Heart left ventricle (tissue), 16 donors: ENCODE measurements at regions of chr17 and their contacts with region 1.

Region 1: GRCh38 chr17:81484195-81484979 is 28.2 kb downstream of the ACTG1 start:
- DNase-seq: peak; percentile 88 to 95 (median 91)
- ATAC-seq: peak; percentile 23 to 75 (median 60)
- H3K4me3 ChIP-seq: peak overlapping the region; percentile 20 to 64 (median 51)
- H3K27ac ChIP-seq: peak overlapping the region in 2 of 12 donors; percentile 49 to 62
- H3K4me1 ChIP-seq: peaks cover 0 to 70% (median 53%) of the 10 kb centered on the region in 12 donors
- H3K27me3 ChIP-seq: peaks cover 0 to 8% (median 0%) of the 10 kb centered on the region in 9 donors
- CTCF ChIP-seq: peak; percentile 93 to 100 (median 98)
- POLR2A ChIP-seq: no peak

Region 2: GRCh38 chr17:81142301-81143199 is 341.8 kb before region 1 on chr17:
- intact Hi-C with region 1: loop called in 1 of 10 experiments (anchors 5 kb)
- DNase-seq: peak; percentile 71 to 88 (median 81)
- ATAC-seq: peak; percentile 90 to 97 (median 94)
- H3K4me3 ChIP-seq: no peak overlapping the region
- H3K27ac ChIP-seq: no peak overlapping the region
- H3K4me1 ChIP-seq: peaks cover 0 to 9% (median 4%) of the 10 kb centered on the region in 12 donors
- H3K27me3 ChIP-seq: no peaks in the 10 kb centered on the region
- CTCF ChIP-seq: peak; percentile 57 to 82 (median 70)
- POLR2A ChIP-seq: no peak

Region 3: GRCh38 chr17:81294856-81295680 is 189.3 kb before region 1 on chr17 and contains the start of gene SLC38A10:
- intact Hi-C with region 1: loop called in 9 of 10 experiments (anchors 2 to 10 kb)
- DNase-seq: peak; percentile 93 to 98 (median 94)
- ATAC-seq: peak; percentile 81 to 94 (median 94)
- H3K4me3 ChIP-seq: peak within 1 kb of the TSS; percentile 57 to 97 (median 85)
- H3K27ac ChIP-seq: peak within 1 kb of the TSS; percentile 85 to 99 (median 96)
- H3K4me1 ChIP-seq: peaks cover 8 to 49% (median 31%) of the 10 kb centered on the region in 12 donors
- H3K27me3 ChIP-seq: no peaks in the 10 kb centered on the region
- CTCF ChIP-seq: peak in 4 of 12 donors; percentile 16 to 63 (median 24)
- POLR2A ChIP-seq: peak; percentile 44 to 94
- total RNA-seq, gene SLC38A10: 27.4 to 67.7 (median 43.1) TPM

Region 4: DNA sequence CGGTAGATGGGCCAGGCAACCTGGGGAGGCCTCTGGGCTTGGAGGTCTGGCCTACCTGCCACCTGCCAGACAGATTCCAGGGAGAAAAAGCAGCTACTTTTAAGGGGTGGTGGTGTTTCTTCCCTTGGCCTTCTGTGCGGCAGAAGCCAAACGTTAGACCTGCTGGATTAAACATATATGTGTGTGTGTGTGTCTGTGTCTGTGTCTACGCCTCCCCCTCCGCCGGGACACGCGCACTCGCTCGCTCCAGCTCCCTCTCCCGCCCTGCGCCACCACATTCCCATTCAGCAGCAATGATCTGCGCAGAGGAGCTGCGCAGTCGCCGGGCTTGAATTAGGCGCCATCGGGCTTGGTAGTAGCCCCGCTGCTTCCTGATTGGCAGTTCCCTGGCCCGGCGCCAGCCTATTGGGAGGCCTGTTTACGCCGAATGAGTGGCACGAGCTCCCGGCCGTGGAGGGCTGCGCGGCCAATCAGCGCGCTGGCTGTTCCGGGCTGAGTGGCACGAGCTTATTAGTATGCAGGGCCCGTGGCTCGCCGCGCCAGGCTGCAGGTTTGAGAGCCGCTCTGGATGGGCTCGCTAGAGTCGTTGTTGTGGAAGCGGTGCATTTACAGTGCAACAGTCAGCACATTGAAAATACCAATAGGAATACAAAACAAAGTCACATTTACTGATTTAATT is 89.3 kb before region 1 on chr17 and contains the start of gene BAHCC1:
- intact Hi-C with region 1: loop called (anchors 2 to 5 kb)
- DNase-seq: peak; percentile 100
- ATAC-seq: peak; percentile 80 to 89 (median 87)
- H3K4me3 ChIP-seq: peak within 1 kb of the TSS; percentile 57 to 95 (median 80)
- H3K27ac ChIP-seq: peak within 1 kb of the TSS; percentile 91 to 100 (median 97)
- H3K4me1 ChIP-seq: peaks cover 6 to 67% (median 30%) of the 10 kb centered on the region in 12 donors
- H3K27me3 ChIP-seq: peaks cover 0 to 14% (median 0%) of the 10 kb centered on the region in 9 donors
- CTCF ChIP-seq: no peak
- POLR2A ChIP-seq: peak; percentile 55 to 98
- total RNA-seq, gene BAHCC1: 6.0 to 19.6 (median 9.3) TPM

Region 5: DNA sequence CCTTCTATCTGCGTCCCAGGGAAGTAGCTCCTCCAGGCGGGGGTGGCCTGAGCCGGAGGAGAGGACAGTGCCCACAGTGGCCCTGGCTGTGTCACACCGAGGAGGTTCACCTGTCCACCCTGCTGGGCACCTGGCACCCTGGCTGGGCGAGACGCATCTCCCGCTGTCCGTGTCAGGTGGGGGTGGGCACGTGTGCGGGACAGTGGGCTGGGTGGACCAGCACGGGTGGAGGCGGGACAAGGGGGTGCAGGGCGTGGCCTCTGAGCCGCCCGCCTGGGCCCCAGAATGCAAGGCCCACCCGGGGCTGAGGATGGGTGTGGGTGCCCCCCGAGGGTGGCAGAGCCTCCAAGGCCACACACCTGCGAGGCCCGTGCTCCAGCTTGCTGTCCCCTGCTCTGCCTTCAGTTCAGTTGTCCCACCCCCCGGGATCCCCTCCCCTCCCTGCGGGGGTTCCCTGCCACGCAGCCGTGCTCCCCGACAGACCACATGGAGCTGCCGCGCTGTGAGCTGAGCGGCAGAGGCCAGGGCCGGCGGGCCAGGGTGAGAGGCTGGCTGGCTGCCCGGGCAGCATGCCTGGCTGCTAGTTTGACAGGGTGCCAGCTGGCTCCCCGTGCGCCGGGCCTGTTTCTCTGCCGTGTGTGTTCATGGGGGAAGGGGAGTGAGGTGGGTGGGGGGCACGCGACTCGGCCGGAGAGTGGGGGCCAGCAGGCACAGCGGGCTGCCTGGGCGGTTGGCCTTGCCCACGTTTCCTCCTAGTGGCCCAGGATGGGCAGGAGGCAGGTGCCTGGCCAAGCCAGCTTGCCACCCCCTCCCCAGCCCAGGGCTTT is 55.2 kb before region 1 on chr17:
- intact Hi-C with region 1: loop called in 4 of 10 experiments (anchors 2 to 5 kb)
- DNase-seq: peak; percentile 75 to 88 (median 84)
- ATAC-seq: peak; percentile 69 to 85 (median 75)
- H3K4me3 ChIP-seq: peak overlapping the region in 8 of 12 donors; percentile 1 to 32 (median 8)
- H3K27ac ChIP-seq: peak overlapping the region in 2 of 12 donors; percentile 13 to 15
- H3K4me1 ChIP-seq: peaks cover 16 to 59% (median 46%) of the 10 kb centered on the region in 12 donors
- H3K27me3 ChIP-seq: peaks cover 0 to 26% (median 0%) of the 10 kb centered on the region in 9 donors
- CTCF ChIP-seq: no peak
- POLR2A ChIP-seq: no peak

Region 6: GRCh38 chr17:81453712-81454111 is 30.7 kb before region 1 on chr17:
- intact Hi-C with region 1: no loop called
- DNase-seq: no peak
- ATAC-seq: peak in 1 of 4 donors; percentile 58
- H3K4me3 ChIP-seq: no peak overlapping the region
- H3K27ac ChIP-seq: no peak overlapping the region
- H3K4me1 ChIP-seq: peaks cover 0 to 10% (median 0%) of the 10 kb centered on the region in 12 donors
- H3K27me3 ChIP-seq: no peaks in the 10 kb centered on the region
- CTCF ChIP-seq: no peak
- POLR2A ChIP-seq: no peak

Region 7: DNA sequence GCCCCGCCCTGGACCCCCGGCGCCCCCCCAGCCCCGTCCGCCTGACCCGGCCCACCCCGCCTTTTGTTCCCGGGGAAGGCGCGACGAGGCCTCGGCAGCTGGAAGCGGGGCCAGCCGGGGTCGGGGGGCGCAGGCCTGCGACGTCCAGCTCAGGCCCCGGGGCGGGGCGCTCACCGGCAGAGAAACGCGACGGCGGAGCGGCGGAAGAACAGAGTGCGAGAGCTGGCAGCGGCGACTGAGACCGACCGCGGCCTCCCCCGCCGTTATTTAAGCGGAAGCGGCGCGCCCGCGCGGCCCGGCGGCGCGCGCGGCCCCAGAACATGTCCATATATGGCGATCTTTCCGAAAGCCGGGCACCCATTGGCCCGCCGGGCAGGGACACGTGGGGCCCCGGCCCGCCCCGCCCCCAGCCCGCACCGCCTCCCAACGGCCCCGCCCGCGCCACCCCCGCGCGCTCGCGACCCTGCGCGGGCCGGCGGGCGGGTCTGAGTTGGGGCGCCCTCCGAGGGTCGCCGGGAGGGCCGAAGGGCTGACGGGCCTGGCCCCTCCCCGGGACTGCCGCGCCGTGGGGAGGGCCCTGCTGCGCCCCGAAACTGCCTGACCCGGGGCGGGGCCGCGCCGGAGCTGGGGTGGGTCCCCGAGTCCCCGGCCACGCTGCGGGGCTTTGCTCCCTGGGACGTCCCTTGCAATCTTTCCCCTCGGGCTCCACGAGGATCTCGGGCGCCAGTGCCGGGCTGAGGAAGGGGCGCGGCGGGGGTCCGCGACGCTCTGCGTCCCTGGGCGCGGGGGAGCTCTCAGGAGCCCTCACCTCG is 28.4 kb after region 1 on chr17 and contains the start of gene ACTG1:
- intact Hi-C with region 1: loop called in 2 of 10 experiments (anchors 1 to 2 kb)
- DNase-seq: peak; percentile 94 to 96 (median 95)
- ATAC-seq: peak; percentile 61 to 77 (median 66)
- H3K4me3 ChIP-seq: peak within 1 kb of the TSS; percentile 81 to 99 (median 94)
- H3K27ac ChIP-seq: peak within 1 kb of the TSS; percentile 96 to 100 (median 100)
- H3K4me1 ChIP-seq: peaks cover 6 to 58% (median 39%) of the 10 kb centered on the region in 12 donors
- H3K27me3 ChIP-seq: no peaks in the 10 kb centered on the region
- CTCF ChIP-seq: no peak
- POLR2A ChIP-seq: peak; percentile 83 to 94
- total RNA-seq, gene ACTG1: 335 to 1,653 (median 423) TPM